ENCODE measurements at regions of chr3 and their contacts with region 1.

Region 1: GRCh38 chr3:21934591-21934990 is 183.6 kb upstream of the ZNF385D start:
- DNase-seq: no peak
- H3K4me3 ChIP-seq: no peak overlapping the region
- H3K27ac ChIP-seq: no peak overlapping the region
- H3K27me3 ChIP-seq: no peaks in the 10 kb centered on the region
- CTCF ChIP-seq: no peak

Region 2: DNA sequence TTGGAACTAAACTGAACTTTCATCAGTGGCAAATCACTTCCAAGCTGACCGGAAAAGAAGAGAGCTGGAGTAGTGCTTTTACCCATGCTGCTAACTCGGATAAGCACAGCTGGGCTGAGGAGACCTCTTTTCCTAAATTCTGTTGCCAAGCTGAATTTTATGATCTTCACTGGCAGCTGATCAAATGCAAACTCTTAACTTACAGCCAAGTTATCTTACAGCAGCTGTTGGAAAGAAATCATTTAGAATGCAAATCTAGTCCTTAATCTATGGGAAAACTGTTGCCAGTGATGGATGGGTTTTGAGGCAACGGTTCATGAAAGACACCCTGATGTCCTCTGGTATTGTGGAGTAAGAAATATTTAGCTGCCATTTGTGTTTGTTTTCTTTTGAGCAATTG is 400.1 kb before region 1 on chr3:
- CTCF ChIA-PET with region 1: no interaction called
- POLR2A ChIA-PET with region 1: interaction called, 11 read pairs
- DNase-seq: no peak
- H3K4me3 ChIP-seq: no peak overlapping the region
- H3K27ac ChIP-seq: no peak overlapping the region
- H3K27me3 ChIP-seq: no peaks in the 10 kb centered on the region
- CTCF ChIP-seq: no peak

Measured in AG04450 (cell line).